Naive thymus-derived CD4-positive, alpha-beta T cell (primary cell): ENCODE measurements at regions of chr13 and their contacts with region 1.

Region 1: GRCh38 chr13:27826379-27827353 is 34.4 kb downstream of the GSX1 start:
- DNase-seq: peak; percentile 29 to 70 (median 53)
- ATAC-seq: peak; percentile 67
- H3K4me3 ChIP-seq: no peak overlapping the region
- H3K4me3 Mint-ChIP-seq: peak overlapping the region in 3 of 10 donors; percentile 22 to 34 (median 29)
- H3K27ac ChIP-seq: no peak overlapping the region
- H3K27ac Mint-ChIP-seq: no peak overlapping the region
- H3K4me1 ChIP-seq: peaks cover 0 to 3% of the 10 kb centered on the region in 2 donors
- H3K4me1 Mint-ChIP-seq: peaks cover 0 to 15% (median 3%) of the 10 kb centered on the region in 7 donors
- H3K27me3 ChIP-seq: peaks cover 3 to 12% of the 10 kb centered on the region in 2 donors
- H3K27me3 Mint-ChIP-seq: peaks cover 73 to 91% (median 75%) of the 10 kb centered on the region in 5 donors

Region 2: DNA sequence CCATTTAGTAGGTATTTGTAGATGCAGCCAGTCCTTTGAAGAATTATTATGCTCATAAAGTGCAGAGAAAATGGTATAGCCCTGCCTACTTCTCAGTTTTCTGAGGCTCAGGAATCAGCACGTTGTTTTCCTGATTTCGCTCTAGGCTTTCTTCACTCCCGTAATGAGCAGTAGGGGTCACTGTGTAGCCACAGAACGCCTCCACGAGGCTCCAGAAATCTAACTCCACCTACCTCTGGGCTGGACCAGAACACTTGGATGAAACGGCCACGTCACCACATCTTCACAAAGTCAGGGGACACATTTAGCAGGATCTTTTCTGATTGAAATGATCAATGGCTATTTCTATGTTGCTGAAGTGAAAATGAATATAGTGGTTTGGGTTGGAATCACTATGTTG is 452.0 kb before region 1 on chr13:
- CTCF ChIA-PET with region 1: interaction called, 124 read pairs
- POLR2A ChIA-PET with region 1: no interaction called
- intact Hi-C with region 1: loop called (anchors 1 kb)
- DNase-seq: peak; percentile 16 to 57 (median 46)
- ATAC-seq: peak; percentile 92
- H3K4me3 ChIP-seq: no peak overlapping the region
- H3K4me3 Mint-ChIP-seq: peak overlapping the region in 1 of 10 donors; percentile 19
- H3K27ac ChIP-seq: no peak overlapping the region
- H3K27ac Mint-ChIP-seq: no peak overlapping the region
- H3K4me1 ChIP-seq: no peaks in the 10 kb centered on the region
- H3K4me1 Mint-ChIP-seq: peaks cover 0 to 17% (median 4%) of the 10 kb centered on the region in 7 donors
- H3K27me3 ChIP-seq: no peaks in the 10 kb centered on the region
- H3K27me3 Mint-ChIP-seq: peaks cover 10 to 26% (median 17%) of the 10 kb centered on the region in 5 donors

Region 3: DNA sequence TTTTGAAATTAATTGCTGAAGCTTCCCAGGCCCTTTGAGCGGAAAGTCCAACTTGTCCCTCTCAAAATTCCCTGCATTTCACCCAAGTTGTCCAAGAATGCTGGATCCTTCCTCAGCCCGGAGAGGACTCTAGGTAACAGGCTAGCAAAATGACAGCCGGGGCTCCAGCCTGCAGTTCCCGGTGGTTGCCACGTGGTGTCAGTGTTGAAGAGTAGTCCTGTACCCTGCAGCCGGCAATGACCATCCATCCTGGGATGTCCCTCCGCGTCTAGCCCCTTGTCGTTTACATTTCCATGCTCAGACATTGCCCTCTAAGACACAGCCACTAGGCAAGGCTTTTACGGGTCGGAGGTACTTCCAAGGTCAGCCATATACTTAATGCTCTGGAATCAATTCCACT is 344.9 kb before region 1 on chr13:
- CTCF ChIA-PET with region 1: no interaction called
- POLR2A ChIA-PET with region 1: no interaction called
- intact Hi-C with region 1: loop called in 1 of 2 experiments (anchors 1 kb)
- DNase-seq: peak in 2 of 9 donors; percentile 9 to 34
- ATAC-seq: no peak
- H3K4me3 ChIP-seq: no peak overlapping the region
- H3K4me3 Mint-ChIP-seq: no peak overlapping the region
- H3K27ac ChIP-seq: no peak overlapping the region
- H3K27ac Mint-ChIP-seq: no peak overlapping the region
- H3K4me1 ChIP-seq: peaks cover 3 to 6% of the 10 kb centered on the region in 2 donors
- H3K4me1 Mint-ChIP-seq: peaks cover 11 to 51% (median 20%) of the 10 kb centered on the region in 7 donors
- H3K27me3 ChIP-seq: no peaks in the 10 kb centered on the region
- H3K27me3 Mint-ChIP-seq: peaks cover 0 to 11% (median 5%) of the 10 kb centered on the region in 5 donors

Region 4: GRCh38 chr13:27678306-27679040 is 148.2 kb before region 1 on chr13:
- CTCF ChIA-PET with region 1: no interaction called
- POLR2A ChIA-PET with region 1: no interaction called
- intact Hi-C with region 1: no loop called
- DNase-seq: no peak
- ATAC-seq: no peak
- H3K4me3 ChIP-seq: no peak overlapping the region
- H3K4me3 Mint-ChIP-seq: no peak overlapping the region
- H3K27ac ChIP-seq: no peak overlapping the region
- H3K27ac Mint-ChIP-seq: no peak overlapping the region
- H3K4me1 ChIP-seq: no peaks in the 10 kb centered on the region
- H3K4me1 Mint-ChIP-seq: no peaks in the 10 kb centered on the region
- H3K27me3 ChIP-seq: no peaks in the 10 kb centered on the region
- H3K27me3 Mint-ChIP-seq: peaks cover 18 to 32% (median 30%) of the 10 kb centered on the region in 5 donors

Region 5: GRCh38 chr13:27770809-27771208 is 55.9 kb before region 1 on chr13:
- CTCF ChIA-PET with region 1: interaction called, 8 read pairs
- POLR2A ChIA-PET with region 1: no interaction called
- intact Hi-C with region 1: loop called (anchors 1 to 5 kb)
- DNase-seq: peak in 1 of 9 donors; percentile 23
- ATAC-seq: no peak
- H3K4me3 ChIP-seq: no peak overlapping the region
- H3K4me3 Mint-ChIP-seq: no peak overlapping the region
- H3K27ac ChIP-seq: no peak overlapping the region
- H3K27ac Mint-ChIP-seq: no peak overlapping the region
- H3K4me1 ChIP-seq: no peaks in the 10 kb centered on the region
- H3K4me1 Mint-ChIP-seq: no peaks in the 10 kb centered on the region
- H3K27me3 ChIP-seq: no peaks in the 10 kb centered on the region
- H3K27me3 Mint-ChIP-seq: peaks cover 13 to 65% (median 43%) of the 10 kb centered on the region in 5 donors

Region 6: GRCh38 chr13:27997904-27998522 is 171.3 kb after region 1 on chr13:
- CTCF ChIA-PET with region 1: interaction called, 5 read pairs
- POLR2A ChIA-PET with region 1: no interaction called
- intact Hi-C with region 1: loop called in 1 of 2 experiments (anchors 5 kb)
- DNase-seq: peak in 4 of 9 donors; percentile 7 to 18 (median 13)
- ATAC-seq: no peak
- H3K4me3 ChIP-seq: no peak overlapping the region
- H3K4me3 Mint-ChIP-seq: no peak overlapping the region
- H3K27ac ChIP-seq: no peak overlapping the region
- H3K27ac Mint-ChIP-seq: peak overlapping the region in 5 of 9 donors; percentile 14 to 72 (median 31)
- H3K4me1 ChIP-seq: no peaks in the 10 kb centered on the region
- H3K4me1 Mint-ChIP-seq: peaks cover 0 to 7% (median 6%) of the 10 kb centered on the region in 7 donors
- H3K27me3 ChIP-seq: no peaks in the 10 kb centered on the region
- H3K27me3 Mint-ChIP-seq: peaks cover 0 to 6% (median 0%) of the 10 kb centered on the region in 5 donors